ENCODE measurements at regions of chr13 and their contacts with region 1.

Region 1: DNA sequence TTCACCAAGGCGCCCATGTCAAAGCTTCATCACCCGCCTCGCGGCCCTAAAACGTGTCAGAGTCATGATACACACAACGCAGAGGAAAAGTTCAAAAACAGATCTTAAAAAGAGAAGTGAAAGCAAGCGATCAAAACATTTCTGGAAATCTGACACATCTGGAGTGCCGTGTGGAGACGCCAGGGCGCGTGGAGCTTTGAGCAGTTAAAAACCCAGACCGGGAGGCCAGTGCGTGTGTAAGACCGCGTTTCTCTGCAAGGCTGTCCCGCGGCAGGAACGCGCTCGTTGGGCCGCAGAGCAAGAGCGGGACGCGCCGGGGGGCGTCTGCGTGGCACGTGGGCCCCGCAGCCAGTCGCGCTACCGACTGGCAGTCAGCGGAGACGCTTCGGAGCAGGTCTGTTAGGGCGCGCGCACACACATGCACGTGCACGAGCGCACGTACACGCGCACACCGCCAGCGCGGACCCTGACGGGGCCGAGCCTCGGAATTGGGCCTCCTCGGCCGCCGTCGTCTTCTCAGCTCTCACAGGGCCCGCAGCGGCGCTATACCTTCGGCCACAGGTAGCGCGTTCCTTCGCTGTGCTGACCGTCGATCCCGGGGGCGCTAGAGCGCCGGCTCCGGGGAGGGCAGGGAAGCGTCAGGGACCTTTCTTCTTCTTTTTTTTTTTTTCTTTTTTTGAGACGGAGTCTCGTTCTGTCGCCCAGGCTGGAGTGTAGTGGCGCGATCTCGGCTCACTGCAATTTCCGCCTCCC is 35.8 kb downstream of the RNF6 start:
- DNase-seq: peak; percentile 84 to 87
- ATAC-seq: peak; percentile 96 to 98 (median 96)
- H3K4me3 ChIP-seq: peak overlapping the region; percentile 33 to 88 (median 66)
- H3K27ac ChIP-seq: peak overlapping the region; percentile 11 to 91 (median 81)
- H3K4me1 ChIP-seq: peaks cover 0 to 24% (median 11%) of the 10 kb centered on the region in 9 donors
- H3K27me3 ChIP-seq: no peaks in the 10 kb centered on the region
- CTCF ChIP-seq: peak in 8 of 9 donors; percentile 13 to 52 (median 32)

Region 2: DNA sequence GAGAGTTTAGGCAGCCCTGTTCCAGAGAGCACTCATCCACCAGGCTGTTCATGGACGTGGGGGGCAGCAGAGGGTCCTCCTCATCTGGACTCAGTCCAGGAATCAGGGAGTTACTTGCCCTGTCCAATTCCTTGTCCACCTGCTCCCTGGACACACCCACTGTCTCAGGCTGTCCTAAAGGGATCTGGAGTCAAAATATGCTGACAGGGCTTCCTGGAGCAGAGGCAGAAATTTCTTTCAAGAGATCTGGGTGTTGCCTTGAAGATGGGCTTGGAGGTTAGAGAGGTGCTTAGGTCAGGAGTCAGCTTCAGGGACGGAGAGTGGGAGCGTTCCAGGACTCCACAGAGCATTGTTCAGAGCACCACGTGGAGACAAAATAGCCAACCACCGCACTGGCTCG is 68.7 kb before region 1 on chr13:
- intact Hi-C with region 1: no loop called
- DNase-seq: no peak
- ATAC-seq: no peak
- H3K4me3 ChIP-seq: no peak overlapping the region
- H3K27ac ChIP-seq: no peak overlapping the region
- H3K4me1 ChIP-seq: no peaks in the 10 kb centered on the region
- H3K27me3 ChIP-seq: no peaks in the 10 kb centered on the region
- CTCF ChIP-seq: no peak

Region 3: GRCh38 chr13:26221721-26222519 is 35.6 kb after region 1 on chr13 and contains the start of gene RNF6:
- intact Hi-C with region 1: loop called in 1 of 10 experiments (anchors 5 kb)
- DNase-seq: peak; percentile 85 to 97
- ATAC-seq: peak; percentile 99
- H3K4me3 ChIP-seq: peak within 1 kb of the TSS; percentile 66 to 99 (median 92)
- H3K27ac ChIP-seq: peak within 1 kb of the TSS; percentile 92 to 99 (median 96)
- H3K4me1 ChIP-seq: peaks cover 3 to 31% (median 27%) of the 10 kb centered on the region in 9 donors
- H3K27me3 ChIP-seq: no peaks in the 10 kb centered on the region
- CTCF ChIP-seq: peak in 2 of 9 donors; percentile 14 to 15
- total RNA-seq, gene RNF6: 17.2 to 26.6 (median 24.5) TPM

Region 4: GRCh38 chr13:26476111-26476781 is 290.0 kb after region 1 on chr13:
- intact Hi-C with region 1: loop called in 3 of 10 experiments (anchors 5 kb)
- DNase-seq: peak in 1 of 2 donors; percentile 35
- ATAC-seq: peak; percentile 78 to 87 (median 82)
- H3K4me3 ChIP-seq: peak overlapping the region in 8 of 10 donors; percentile 13 to 49 (median 34)
- H3K27ac ChIP-seq: peak overlapping the region in 9 of 10 donors; percentile 59 to 93 (median 68)
- H3K4me1 ChIP-seq: peaks cover 0 to 28% (median 11%) of the 10 kb centered on the region in 9 donors
- H3K27me3 ChIP-seq: no peaks in the 10 kb centered on the region
- CTCF ChIP-seq: no peak

Region 5: GRCh38 chr13:26494571-26495195 is 308.4 kb after region 1 on chr13:
- intact Hi-C with region 1: loop called (anchors 1 to 5 kb)
- DNase-seq: no peak
- ATAC-seq: no peak
- H3K4me3 ChIP-seq: no peak overlapping the region
- H3K27ac ChIP-seq: no peak overlapping the region
- H3K4me1 ChIP-seq: peaks cover 0 to 14% (median 0%) of the 10 kb centered on the region in 9 donors
- H3K27me3 ChIP-seq: peaks cover 0 to 6% (median 0%) of the 10 kb centered on the region in 7 donors
- CTCF ChIP-seq: no peak

Region 6: GRCh38 chr13:26698392-26699196 is 512.3 kb after region 1 on chr13:
- intact Hi-C with region 1: loop called (anchors 1 to 10 kb)
- DNase-seq: peak; percentile 77 to 83
- ATAC-seq: peak; percentile 71 to 91 (median 86)
- H3K4me3 ChIP-seq: peak overlapping the region in 6 of 10 donors; percentile 12 to 43 (median 32)
- H3K27ac ChIP-seq: no peak overlapping the region
- H3K4me1 ChIP-seq: peaks cover 0 to 7% (median 5%) of the 10 kb centered on the region in 9 donors
- H3K27me3 ChIP-seq: peaks cover 0 to 4% (median 0%) of the 10 kb centered on the region in 7 donors
- CTCF ChIP-seq: peak; percentile 89 to 99 (median 98)